PC-9 (cell line): ENCODE measurements at regions of chr11 and their contacts with region 1.

Region 1: DNA sequence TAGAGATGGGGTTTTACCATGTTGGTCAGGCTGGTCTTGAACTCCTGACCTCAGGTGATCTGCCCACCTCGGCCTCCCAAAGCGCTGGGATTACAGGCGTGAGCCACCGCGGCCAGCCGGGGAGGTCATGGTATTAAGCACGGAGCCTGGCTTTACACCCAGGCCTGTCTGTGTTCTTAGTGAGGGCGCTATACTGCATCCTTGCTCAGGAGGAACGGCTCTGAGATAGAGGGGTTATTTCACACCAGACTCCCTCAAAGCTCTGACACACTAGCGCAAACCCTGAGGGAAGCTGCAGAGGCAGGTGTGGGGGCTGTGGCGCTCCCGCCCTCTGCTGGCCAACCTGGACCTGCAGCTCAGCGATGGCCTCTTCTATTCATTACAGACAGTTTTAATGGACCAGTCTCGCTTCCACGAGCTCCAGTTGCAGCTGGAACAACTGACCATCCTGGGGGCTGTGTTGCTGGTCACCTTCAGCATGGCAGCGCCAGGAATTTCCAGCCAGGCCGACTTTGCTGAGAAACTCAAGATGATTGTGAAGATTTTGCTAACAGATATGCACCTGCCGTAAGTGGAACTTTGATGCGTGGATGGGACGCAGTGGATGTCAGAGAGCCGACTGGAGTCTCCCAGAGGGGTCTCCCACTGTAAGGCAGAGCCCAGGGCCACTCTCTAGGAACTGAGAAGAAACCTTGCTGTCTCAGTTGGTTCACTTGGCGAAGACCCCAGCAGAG is 26.2 kb downstream of the TCP11L1 start:
- DNase-seq: peak in 1 of 2 experiments; percentile 54
- H3K4me3 ChIP-seq: no peak overlapping the region
- H3K27ac ChIP-seq: no peak overlapping the region
- H3K4me1 ChIP-seq: no peaks in the 10 kb centered on the region
- H3K27me3 ChIP-seq: no peaks in the 10 kb centered on the region
- CTCF ChIP-seq: peak; percentile 90

Region 2: DNA sequence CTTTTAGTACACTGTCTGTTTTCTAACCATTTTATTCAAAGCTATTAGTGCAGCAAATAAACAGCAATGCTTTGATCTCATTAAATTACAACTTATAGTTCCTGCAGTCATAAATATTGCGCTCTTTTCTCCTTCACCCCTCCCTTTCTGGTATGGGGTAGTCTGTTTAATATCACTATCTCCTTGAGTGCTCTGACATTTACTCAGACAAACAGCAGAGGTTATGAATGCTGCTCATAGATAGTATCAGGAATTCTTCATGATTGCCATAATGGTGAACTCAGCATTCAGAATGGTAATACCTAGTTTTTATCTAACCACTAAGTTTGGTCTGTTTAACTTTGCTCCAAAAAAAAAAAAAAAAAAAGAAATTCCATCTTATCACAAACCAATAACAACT is 394.6 kb before region 1 on chr11:
- CTCF ChIA-PET with region 1: no interaction called
- POLR2A ChIA-PET with region 1: no interaction called
- intact Hi-C with region 1: no loop called
- DNase-seq: no peak
- H3K4me3 ChIP-seq: no peak overlapping the region
- H3K27ac ChIP-seq: no peak overlapping the region
- H3K4me1 ChIP-seq: no peaks in the 10 kb centered on the region
- H3K27me3 ChIP-seq: no peaks in the 10 kb centered on the region
- CTCF ChIP-seq: no peak

Region 3: GRCh38 chr11:32713496-32713895 is 352.1 kb before region 1 on chr11:
- CTCF ChIA-PET with region 1: no interaction called
- POLR2A ChIA-PET with region 1: no interaction called
- intact Hi-C with region 1: loop called (anchors 1 kb)
- DNase-seq: peak in 1 of 2 experiments; percentile 11
- H3K4me3 ChIP-seq: no peak overlapping the region
- H3K27ac ChIP-seq: no peak overlapping the region
- H3K4me1 ChIP-seq: peaks cover 4% of the 10 kb centered on the region
- H3K27me3 ChIP-seq: no peaks in the 10 kb centered on the region
- CTCF ChIP-seq: peak; percentile 80

Region 4: DNA sequence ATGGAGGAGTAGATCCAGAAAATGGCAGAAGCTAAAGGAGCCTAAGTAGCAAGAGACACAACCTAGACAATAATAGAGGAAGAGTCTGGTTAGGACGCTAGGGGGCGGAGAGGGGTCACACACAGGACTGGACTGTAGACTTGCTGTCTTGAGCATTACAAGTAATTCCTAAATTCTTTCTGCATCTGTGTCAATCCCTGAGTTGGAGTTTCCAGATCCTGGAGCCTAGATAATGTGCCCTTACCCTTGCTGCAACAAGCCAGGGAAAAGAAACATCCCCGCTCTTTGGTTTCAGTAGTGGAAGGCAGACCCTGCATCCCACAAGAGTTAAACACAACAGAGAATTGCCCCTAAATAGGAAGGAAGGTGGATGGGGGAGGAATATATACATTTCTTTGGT is 256.3 kb before region 1 on chr11:
- CTCF ChIA-PET with region 1: interaction called, 7 read pairs
- POLR2A ChIA-PET with region 1: no interaction called
- intact Hi-C with region 1: loop called (anchors 1 kb)
- DNase-seq: peak; percentile 66 to 73
- H3K4me3 ChIP-seq: no peak overlapping the region
- H3K27ac ChIP-seq: no peak overlapping the region
- H3K4me1 ChIP-seq: no peaks in the 10 kb centered on the region
- H3K27me3 ChIP-seq: no peaks in the 10 kb centered on the region
- CTCF ChIP-seq: peak; percentile 94

Region 5: DNA sequence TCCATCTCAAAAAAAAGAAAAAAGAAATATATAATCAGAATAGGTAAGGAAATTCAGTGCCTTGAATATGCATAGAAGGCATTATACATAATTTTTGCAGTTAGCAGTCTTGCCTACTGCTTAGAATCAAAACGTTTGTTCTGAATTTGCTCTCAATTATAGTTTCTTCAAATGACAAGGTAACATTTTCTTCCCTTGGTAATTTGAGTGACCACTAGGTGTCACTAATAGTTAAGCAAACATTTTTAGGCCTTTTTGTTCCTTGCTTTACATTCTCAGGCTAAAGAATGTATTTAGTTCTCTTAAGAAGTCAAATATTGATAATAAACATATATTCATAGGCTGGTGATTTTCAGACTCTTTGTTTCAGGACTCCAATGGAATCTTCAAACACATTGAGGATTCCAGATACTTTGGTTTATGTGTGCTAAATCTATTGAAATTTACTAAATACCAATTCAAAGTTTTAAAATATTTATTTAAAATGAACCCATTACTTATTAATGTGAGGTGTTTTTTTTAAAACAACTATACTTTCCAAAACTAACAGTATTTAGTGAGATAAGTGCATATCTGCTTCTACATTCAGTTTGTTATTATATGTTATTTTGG is 105.0 kb before region 1 on chr11:
- CTCF ChIA-PET with region 1: no interaction called
- POLR2A ChIA-PET with region 1: no interaction called
- intact Hi-C with region 1: loop called (anchors 1 kb)
- DNase-seq: peak in 1 of 2 experiments; percentile 59
- H3K4me3 ChIP-seq: no peak overlapping the region
- H3K27ac ChIP-seq: no peak overlapping the region
- H3K4me1 ChIP-seq: no peaks in the 10 kb centered on the region
- H3K27me3 ChIP-seq: no peaks in the 10 kb centered on the region
- CTCF ChIP-seq: peak; percentile 90

Region 6: DNA sequence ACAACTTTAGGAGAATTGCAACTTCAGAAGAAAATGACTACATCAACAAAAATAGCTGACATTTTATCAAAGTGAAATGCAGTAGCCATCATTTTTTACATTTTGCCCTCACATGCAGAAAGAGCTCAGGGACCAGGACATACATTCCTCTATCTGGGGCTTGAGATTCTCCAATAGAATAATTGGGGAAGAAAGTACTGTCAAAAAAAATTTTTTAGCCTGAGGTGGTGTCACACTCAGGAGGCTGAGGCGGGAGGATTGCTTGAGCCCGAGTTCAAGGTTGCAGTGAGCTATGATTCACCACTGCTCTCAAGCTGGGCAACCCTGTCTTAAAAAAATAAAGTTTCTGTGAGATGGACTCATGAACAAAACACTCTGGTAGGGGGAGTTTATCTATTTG is 82.1 kb before region 1 on chr11:
- CTCF ChIA-PET with region 1: no interaction called
- POLR2A ChIA-PET with region 1: no interaction called
- intact Hi-C with region 1: loop called (anchors 5 kb)
- DNase-seq: no peak
- H3K4me3 ChIP-seq: no peak overlapping the region
- H3K27ac ChIP-seq: no peak overlapping the region
- H3K4me1 ChIP-seq: no peaks in the 10 kb centered on the region; the same call in 1 of the 2 replicates
- H3K27me3 ChIP-seq: no peaks in the 10 kb centered on the region
- CTCF ChIP-seq: no peak